Mucosa of descending colon (tissue), 3 donors: ENCODE measurements at regions of chr2 and their contacts with region 1.

Region 1: GRCh38 chr2:30711646-30712085 is 95.6 kb downstream of the CAPN13 start:
- DNase-seq: peak; percentile 71 to 96 (median 84)
- ATAC-seq: peak; percentile 92
- H3K4me3 ChIP-seq: no peak overlapping the region
- H3K4me1 ChIP-seq: no peaks in the 10 kb centered on the region
- CTCF ChIP-seq: peak; percentile 100

Region 2: GRCh38 chr2:30208452-30208851 is 503.2 kb before region 1 on chr2:
- intact Hi-C with region 1: loop called (anchors 2 to 5 kb)
- DNase-seq: peak in 2 of 3 donors; percentile 67 to 72
- ATAC-seq: peak; percentile 92
- H3K4me3 ChIP-seq: no peak overlapping the region
- H3K4me1 ChIP-seq: no peaks in the 10 kb centered on the region
- CTCF ChIP-seq: peak; percentile 50

Region 3: GRCh38 chr2:30653847-30654246 is 57.8 kb before region 1 on chr2:
- intact Hi-C with region 1: no loop called
- DNase-seq: no peak
- ATAC-seq: no peak
- H3K4me3 ChIP-seq: no peak overlapping the region
- H3K4me1 ChIP-seq: no peaks in the 10 kb centered on the region
- CTCF ChIP-seq: no peak

Region 4: DNA sequence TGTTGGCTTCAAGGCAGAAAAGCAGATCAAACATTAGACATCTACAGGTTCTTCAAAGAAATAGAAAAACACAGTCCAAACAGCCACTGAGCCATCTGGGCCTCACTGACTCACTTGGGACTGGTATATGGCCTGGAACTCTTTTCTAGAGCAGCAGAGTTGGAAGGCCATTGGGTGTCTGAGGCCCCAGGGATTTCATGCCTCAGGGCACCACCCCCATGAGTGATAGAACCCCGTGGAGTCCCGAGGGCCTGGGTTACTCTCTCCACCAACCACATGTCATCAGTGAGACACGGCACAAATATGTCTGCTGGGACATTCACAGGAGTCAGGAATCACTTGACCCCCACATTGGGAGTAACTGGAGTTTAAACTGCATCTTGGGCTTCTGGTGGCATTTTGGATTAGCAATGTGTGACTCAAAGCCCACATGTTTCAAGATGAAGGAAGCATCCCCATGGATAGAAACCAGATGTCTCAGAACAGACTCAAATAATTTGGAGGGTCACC is 51.5 kb after region 1 on chr2:
- intact Hi-C with region 1: no loop called
- DNase-seq: no peak
- ATAC-seq: no peak
- H3K4me3 ChIP-seq: no peak overlapping the region
- H3K4me1 ChIP-seq: no peaks in the 10 kb centered on the region
- CTCF ChIP-seq: no peak

Region 5: DNA sequence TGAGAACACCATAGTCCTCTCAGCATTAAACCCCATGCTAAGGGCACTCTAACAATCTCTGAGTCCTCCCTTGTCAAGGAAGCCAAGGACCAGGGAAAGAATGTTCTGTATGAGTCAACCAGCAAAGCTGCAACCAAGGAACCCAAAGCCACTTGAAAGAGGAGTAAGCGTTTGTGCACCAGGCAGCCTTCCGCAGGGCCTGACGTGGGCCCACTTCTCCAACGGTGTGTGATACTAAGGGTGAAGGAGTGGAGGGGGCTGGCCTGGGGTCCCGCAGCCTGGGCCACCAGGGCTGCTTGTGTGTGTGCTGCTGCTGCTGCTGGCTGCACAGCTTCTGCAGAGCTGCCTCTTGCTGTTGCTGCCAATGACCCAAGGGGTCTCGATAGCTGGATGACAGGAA is 456.6 kb after region 1 on chr2:
- intact Hi-C with region 1: loop called in 1 of 2 experiments (anchors 5 kb)
- DNase-seq: no peak
- ATAC-seq: no peak
- H3K4me3 ChIP-seq: no peak overlapping the region
- H3K4me1 ChIP-seq: no peaks in the 10 kb centered on the region
- CTCF ChIP-seq: no peak

Region 6: GRCh38 chr2:31333527-31334183 is 622.0 kb after region 1 on chr2:
- intact Hi-C with region 1: loop called in 1 of 2 experiments (anchors 5 kb)
- DNase-seq: peak; percentile 60 to 87 (median 79)
- ATAC-seq: peak; percentile 90
- H3K4me3 ChIP-seq: no peak overlapping the region
- H3K4me1 ChIP-seq: no peaks in the 10 kb centered on the region
- CTCF ChIP-seq: peak; percentile 88